ENCODE measurements at regions of chr2 and their contacts with region 1.

Region 1: DNA sequence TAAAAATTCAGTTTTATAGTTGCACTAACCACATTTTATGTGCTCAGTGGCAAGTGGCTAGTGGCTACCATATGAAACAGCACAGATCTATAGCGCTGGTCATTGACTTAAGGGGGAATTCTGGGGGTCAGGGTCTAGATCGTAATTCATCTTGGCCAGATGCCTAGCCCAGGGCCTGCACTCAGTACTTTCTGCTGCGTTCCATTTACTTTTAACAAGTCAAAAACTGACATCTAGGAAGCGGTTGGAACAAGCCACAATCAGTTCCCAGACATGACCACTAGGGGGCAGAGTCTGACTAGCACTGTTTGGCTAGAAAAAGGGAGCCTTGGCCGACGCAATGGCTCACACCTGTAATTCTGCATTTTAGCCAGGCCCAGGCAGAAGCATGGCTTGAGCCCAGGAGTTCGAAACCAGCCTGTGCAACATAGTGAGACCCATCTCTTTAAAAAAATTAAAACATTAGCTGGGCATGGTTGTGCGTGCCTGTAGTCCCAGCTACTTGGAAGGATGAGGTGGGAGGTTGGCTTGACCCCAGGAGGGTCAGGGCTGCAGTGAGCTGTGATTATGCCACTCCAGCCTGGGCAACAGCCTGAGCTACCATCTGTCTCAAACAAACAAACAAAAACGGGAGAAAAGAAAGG is 9.0 kb upstream of the TMBIM1 start:
- DNase-seq: peak; percentile 94
- H3K4me3 Mint-ChIP-seq: no peak overlapping the region
- H3K27ac Mint-ChIP-seq: peak overlapping the region; percentile 4
- H3K4me1 Mint-ChIP-seq: peaks cover 6% of the 10 kb centered on the region
- H3K27me3 Mint-ChIP-seq: peaks cover 32% of the 10 kb centered on the region

Region 2: DNA sequence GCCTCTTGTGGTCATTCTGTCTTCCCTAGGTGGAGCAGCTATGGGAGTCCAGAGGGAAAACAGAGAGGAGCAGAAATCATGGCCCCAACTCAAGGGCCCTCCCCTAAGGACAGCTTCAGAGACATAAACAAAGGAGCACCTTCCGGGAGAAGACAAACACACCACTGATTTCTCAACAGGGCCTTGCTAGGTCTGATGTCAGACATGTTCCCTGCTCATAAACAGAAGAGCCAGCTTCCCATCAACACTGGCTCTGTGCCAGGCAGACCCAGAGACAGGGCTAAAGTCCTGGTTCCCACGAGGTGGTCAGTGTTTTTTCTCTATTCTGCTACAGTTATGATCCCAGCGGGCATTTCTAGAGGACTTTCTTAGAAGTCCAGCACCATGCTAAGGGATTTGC is 156.2 kb before region 1 on chr2:
- CTCF ChIA-PET with region 1: no interaction called
- DNase-seq: peak; percentile 6
- H3K4me3 Mint-ChIP-seq: no peak overlapping the region
- H3K27ac Mint-ChIP-seq: no peak overlapping the region
- H3K4me1 Mint-ChIP-seq: peaks cover 5% of the 10 kb centered on the region
- H3K27me3 Mint-ChIP-seq: peaks cover 48% of the 10 kb centered on the region

Region 3: DNA sequence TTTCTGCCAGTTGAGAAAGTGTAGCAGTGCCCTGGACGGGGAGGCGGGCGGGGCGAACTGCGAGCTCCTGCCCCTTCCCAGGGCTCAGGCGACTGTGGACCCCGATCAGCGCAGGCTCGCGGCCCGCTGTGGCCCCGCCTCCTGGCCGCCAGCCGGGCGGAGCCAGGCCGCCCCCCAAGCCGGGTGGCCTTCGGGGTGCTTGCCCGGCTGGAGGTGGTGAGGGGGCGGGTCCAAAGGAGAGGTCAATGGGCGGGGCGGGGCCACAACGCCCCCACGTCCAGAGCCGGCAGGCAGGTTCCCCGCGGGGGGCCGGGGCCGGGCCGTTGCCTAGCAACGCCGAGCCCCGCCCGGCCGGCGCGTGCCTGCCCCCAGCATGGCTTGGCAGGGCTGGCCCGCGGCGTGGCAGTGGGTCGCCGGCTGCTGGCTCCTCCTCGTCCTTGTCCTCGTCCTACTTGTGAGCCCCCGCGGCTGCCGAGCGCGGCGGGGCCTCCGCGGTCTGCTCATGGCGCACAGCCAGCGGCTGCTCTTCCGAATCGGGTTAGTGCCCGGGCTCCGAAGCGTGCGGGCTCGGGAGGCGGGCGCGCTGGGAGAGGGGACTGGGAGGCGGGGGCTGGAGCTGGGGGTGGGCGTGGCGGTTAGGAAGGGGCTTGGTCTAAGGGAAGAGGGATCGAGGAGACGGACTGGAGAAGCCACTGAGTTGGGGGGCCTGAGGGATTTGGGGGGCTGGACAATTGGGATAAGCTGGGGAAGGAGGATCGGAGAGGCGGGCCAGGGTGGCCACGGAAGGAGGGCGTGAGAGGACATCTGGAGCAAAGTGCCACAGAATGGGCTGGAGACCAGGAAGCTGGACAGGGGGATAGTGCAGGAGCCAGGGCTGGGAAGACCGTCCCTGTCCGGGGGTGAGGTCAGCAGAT is 21.9 kb after region 1 on chr2:
- CTCF ChIA-PET with region 1: interaction called, 10 read pairs
- DNase-seq: peak; percentile 67
- H3K4me3 Mint-ChIP-seq: peak overlapping the region; percentile 70
- H3K27ac Mint-ChIP-seq: no peak overlapping the region
- H3K4me1 Mint-ChIP-seq: peaks cover 44% of the 10 kb centered on the region
- H3K27me3 Mint-ChIP-seq: peaks cover 35% of the 10 kb centered on the region

Region 4: GRCh38 chr2:218394298-218395089 is 93.2 kb after region 1 on chr2:
- CTCF ChIA-PET with region 1: interaction called, 14 read pairs
- DNase-seq: no peak
- H3K4me3 Mint-ChIP-seq: no peak overlapping the region
- H3K27ac Mint-ChIP-seq: no peak overlapping the region
- H3K4me1 Mint-ChIP-seq: peaks cover 34% of the 10 kb centered on the region
- H3K27me3 Mint-ChIP-seq: peaks cover 30% of the 10 kb centered on the region

Region 5: DNA sequence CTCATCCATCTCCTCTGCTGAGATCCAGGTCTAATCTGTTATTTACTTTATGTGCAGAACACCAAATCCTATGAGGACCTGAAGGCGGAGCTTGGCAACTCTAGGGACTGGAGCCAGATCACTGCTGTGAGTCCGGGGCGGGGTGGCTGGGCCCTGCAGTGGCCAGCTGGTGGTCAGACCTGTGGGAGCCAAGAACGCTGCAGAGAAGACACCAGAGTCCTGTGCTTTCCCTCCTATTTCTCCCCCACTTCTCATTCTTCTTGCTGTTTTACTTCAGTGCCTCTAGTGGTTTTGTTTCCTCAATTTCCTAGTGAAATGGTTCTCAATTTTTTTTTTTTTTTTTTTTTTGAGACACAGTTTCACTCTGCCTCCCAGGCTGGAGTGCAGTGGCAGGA is 137.3 kb after region 1 on chr2:
- CTCF ChIA-PET with region 1: no interaction called
- DNase-seq: no peak
- H3K4me3 Mint-ChIP-seq: no peak overlapping the region
- H3K27ac Mint-ChIP-seq: no peak overlapping the region
- H3K4me1 Mint-ChIP-seq: no peaks in the 10 kb centered on the region
- H3K27me3 Mint-ChIP-seq: peaks cover 10% of the 10 kb centered on the region

Measured in activated naive CD4-positive, alpha-beta T cell treated with anti-CD3 and anti-CD28 coated beads, Interleukin-2, amount 10 ng/mL, durations not matched to agents 7 days and 5 days (primary cell).